ENCODE measurements at regions of chr12 and their contacts with region 1.

Region 1: GRCh38 chr12:34121360-34121759 is 99.1 kb downstream of the ALG10 start:
- DNase-seq: no peak
- H3K4me3 ChIP-seq: no peak overlapping the region
- H3K27ac ChIP-seq: no peak overlapping the region
- H3K4me1 ChIP-seq: no peaks in the 10 kb centered on the region
- H3K27me3 ChIP-seq: no peaks in the 10 kb centered on the region
- CTCF ChIP-seq: no peak

Region 2: DNA sequence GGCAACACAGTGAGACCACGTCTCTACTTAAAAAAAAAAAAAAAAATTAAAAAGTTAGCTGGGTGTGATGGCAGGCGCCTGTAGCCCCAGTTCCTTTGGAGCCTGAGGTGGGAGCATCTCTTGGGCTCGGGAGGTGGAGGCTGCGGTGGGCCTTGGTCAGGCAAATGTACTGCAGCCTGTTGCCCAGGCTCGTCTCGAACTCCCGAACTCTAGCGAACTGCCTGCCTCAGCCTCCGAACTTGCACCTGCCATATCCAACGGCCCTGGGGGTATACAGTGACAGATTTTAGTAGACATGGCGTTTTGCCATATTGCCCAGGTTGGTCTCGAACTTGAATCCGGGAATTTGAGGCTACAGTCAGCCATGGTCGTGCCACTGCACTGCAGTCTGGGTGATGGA is 96.3 kb after region 1 on chr12:
- intact Hi-C with region 1: loop called (anchors 2 kb)
- DNase-seq: no peak
- H3K4me3 ChIP-seq: no peak overlapping the region
- H3K27ac ChIP-seq: no peak overlapping the region
- H3K4me1 ChIP-seq: no peaks in the 10 kb centered on the region
- H3K27me3 ChIP-seq: no peaks in the 10 kb centered on the region
- CTCF ChIP-seq: no peak

Measured in ascending aorta (tissue), 2 donors.